ENCODE measurements at regions of chr2 and their contacts with region 1.

Region 1: GRCh38 chr2:136238286-136239078 is 120.5 kb upstream of the CXCR4 start:
- DNase-seq: peak; percentile 93
- ATAC-seq: peak; percentile 70
- H3K4me3 ChIP-seq: peak overlapping the region in 1 of 5 experiments; percentile 17
- H3K4me3 Mint-ChIP-seq: peak overlapping the region; percentile 23
- H3K27ac ChIP-seq: peak overlapping the region; percentile 98
- H3K27ac Mint-ChIP-seq: peak overlapping the region; percentile 87
- H3K4me1 ChIP-seq: peaks cover 66 to 74% of the 10 kb centered on the region in 2 donors
- H3K4me1 Mint-ChIP-seq: peaks cover 85% of the 10 kb centered on the region
- H3K27me3 ChIP-seq: no peaks in the 10 kb centered on the region
- H3K27me3 Mint-ChIP-seq: no peaks in the 10 kb centered on the region
- CTCF ChIP-seq: no peak

Region 2: DNA sequence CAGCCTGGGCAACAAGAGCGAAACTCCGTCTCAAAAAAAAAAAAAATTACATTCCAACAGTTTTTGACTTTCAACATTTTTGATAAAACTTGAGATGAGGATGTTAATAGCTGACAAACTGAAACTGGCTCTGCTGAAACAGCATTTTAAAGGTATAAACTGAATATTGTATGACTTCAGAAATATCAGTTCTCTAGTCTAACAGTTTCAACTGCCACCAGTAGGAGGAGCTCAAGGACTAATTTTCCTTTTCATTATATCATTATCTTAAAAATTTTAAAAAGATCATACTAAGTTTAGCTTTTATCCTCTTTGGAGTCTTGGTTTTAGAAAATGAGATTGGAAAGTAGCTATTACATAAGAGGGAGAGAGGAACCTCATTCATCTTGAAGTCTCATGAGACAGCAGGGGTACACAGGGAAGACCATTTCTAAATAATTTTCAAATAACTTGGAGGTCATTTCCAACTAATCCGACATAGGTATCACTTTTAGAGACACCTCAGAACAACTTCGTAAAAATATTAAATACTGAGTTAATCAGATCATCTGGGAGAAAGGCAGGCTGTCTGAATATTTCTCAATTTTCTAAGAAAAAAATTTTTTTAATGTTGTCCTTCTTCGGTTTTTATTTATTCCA is 324.6 kb before region 1 on chr2:
- CTCF ChIA-PET with region 1: interaction called, 17 read pairs
- POLR2A ChIA-PET with region 1: interaction called, 3 read pairs
- intact Hi-C with region 1: no loop called
- DNase-seq: peak; percentile 74
- ATAC-seq: peak; percentile 41
- H3K4me3 ChIP-seq: no peak overlapping the region
- H3K4me3 Mint-ChIP-seq: no peak overlapping the region
- H3K27ac ChIP-seq: peak overlapping the region in 1 of 2 donors; percentile 46
- H3K27ac Mint-ChIP-seq: peak overlapping the region; percentile 46
- H3K4me1 ChIP-seq: no peaks in the 10 kb centered on the region
- H3K4me1 Mint-ChIP-seq: peaks cover 10% of the 10 kb centered on the region
- H3K27me3 ChIP-seq: no peaks in the 10 kb centered on the region
- H3K27me3 Mint-ChIP-seq: no peaks in the 10 kb centered on the region
- CTCF ChIP-seq: peak; percentile 96

Region 3: DNA sequence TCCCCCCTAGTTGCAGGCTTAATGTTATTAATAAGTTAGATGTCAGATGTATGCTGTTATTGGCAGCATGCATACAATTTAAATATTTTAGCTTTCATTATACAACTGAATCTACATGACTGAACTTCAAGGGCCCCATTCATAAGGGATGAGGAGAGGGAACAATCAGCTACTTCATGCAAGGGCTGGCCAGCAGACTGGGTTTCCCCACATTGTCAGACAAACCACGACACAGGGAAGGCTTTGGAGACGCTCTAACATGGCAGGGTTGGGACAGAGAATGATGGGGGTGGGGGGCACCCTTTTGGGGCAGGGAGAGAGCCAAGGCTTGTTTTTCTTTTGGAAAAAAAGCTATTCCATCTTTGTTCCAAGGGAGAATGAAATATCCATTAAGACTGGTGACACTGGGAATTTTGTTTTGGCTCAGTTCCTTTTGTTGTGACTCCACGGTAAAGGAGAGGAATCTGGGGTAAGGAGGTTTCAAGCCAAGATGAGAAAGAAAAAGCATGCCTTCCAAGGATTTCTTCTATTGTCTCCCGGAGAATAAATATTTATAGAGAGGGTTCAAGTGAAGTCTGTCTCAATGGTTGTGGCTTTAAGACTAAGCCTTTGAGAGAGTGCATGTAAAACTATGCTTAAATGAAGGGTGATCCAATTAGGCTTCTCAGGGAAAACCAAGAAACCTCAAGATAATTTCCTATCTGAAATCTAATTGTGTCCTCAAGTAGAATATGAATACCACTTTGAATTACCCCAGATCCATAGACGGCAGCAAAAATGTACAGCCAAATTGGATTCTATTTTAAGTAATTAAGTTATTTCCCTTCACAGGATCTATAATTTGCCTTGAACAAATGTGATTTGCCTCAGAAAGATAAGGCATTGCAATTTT is 125.9 kb before region 1 on chr2:
- CTCF ChIA-PET with region 1: interaction called, 7 read pairs
- POLR2A ChIA-PET with region 1: interaction called, 136 read pairs
- intact Hi-C with region 1: no loop called
- DNase-seq: peak; percentile 48
- ATAC-seq: no peak
- H3K4me3 ChIP-seq: no peak overlapping the region
- H3K4me3 Mint-ChIP-seq: peak overlapping the region; percentile 98
- H3K27ac ChIP-seq: no peak overlapping the region
- H3K27ac Mint-ChIP-seq: peak overlapping the region; percentile 69
- H3K4me1 ChIP-seq: peaks cover 70 to 72% of the 10 kb centered on the region in 2 donors
- H3K4me1 Mint-ChIP-seq: peaks cover 74% of the 10 kb centered on the region
- H3K27me3 ChIP-seq: no peaks in the 10 kb centered on the region
- H3K27me3 Mint-ChIP-seq: no peaks in the 10 kb centered on the region
- CTCF ChIP-seq: no peak

Region 4: GRCh38 chr2:136135921-136136906 is 102.3 kb before region 1 on chr2:
- CTCF ChIA-PET with region 1: interaction called, 97 read pairs
- POLR2A ChIA-PET with region 1: interaction called, 224 read pairs
- intact Hi-C with region 1: loop called (anchors 1 kb)
- DNase-seq: peak; percentile 94
- ATAC-seq: peak; percentile 50
- H3K4me3 ChIP-seq: peak overlapping the region in 3 of 5 experiments; percentile 10 to 33 (median 10)
- H3K4me3 Mint-ChIP-seq: peak overlapping the region; percentile 83
- H3K27ac ChIP-seq: peak overlapping the region; percentile 98 to 99
- H3K27ac Mint-ChIP-seq: peak overlapping the region; percentile 96
- H3K4me1 ChIP-seq: peaks cover 94 to 98% of the 10 kb centered on the region in 2 donors
- H3K4me1 Mint-ChIP-seq: peaks cover 92% of the 10 kb centered on the region
- H3K27me3 ChIP-seq: no peaks in the 10 kb centered on the region
- H3K27me3 Mint-ChIP-seq: no peaks in the 10 kb centered on the region
- CTCF ChIP-seq: no peak

Region 5: GRCh38 chr2:136191041-136191440 is 47.4 kb before region 1 on chr2:
- CTCF ChIA-PET with region 1: no interaction called
- POLR2A ChIA-PET with region 1: no interaction called
- intact Hi-C with region 1: no loop called
- DNase-seq: no peak
- ATAC-seq: no peak
- H3K4me3 ChIP-seq: no peak overlapping the region
- H3K4me3 Mint-ChIP-seq: no peak overlapping the region
- H3K27ac ChIP-seq: no peak overlapping the region
- H3K27ac Mint-ChIP-seq: no peak overlapping the region
- H3K4me1 ChIP-seq: peaks cover 8 to 17% of the 10 kb centered on the region in 2 donors
- H3K4me1 Mint-ChIP-seq: peaks cover 28% of the 10 kb centered on the region
- H3K27me3 ChIP-seq: no peaks in the 10 kb centered on the region
- H3K27me3 Mint-ChIP-seq: no peaks in the 10 kb centered on the region
- CTCF ChIP-seq: no peak

Region 6: GRCh38 chr2:136217996-136218395 is 20.5 kb before region 1 on chr2:
- CTCF ChIA-PET with region 1: interaction called, 97 read pairs
- POLR2A ChIA-PET with region 1: interaction called, 44 read pairs
- intact Hi-C with region 1: loop called (anchors 1 kb)
- DNase-seq: no peak
- ATAC-seq: no peak
- H3K4me3 ChIP-seq: no peak overlapping the region
- H3K4me3 Mint-ChIP-seq: peak overlapping the region; percentile 24
- H3K27ac ChIP-seq: no peak overlapping the region
- H3K27ac Mint-ChIP-seq: peak overlapping the region; percentile 64
- H3K4me1 ChIP-seq: peaks cover 64 to 76% of the 10 kb centered on the region in 2 donors
- H3K4me1 Mint-ChIP-seq: peaks cover 94% of the 10 kb centered on the region
- H3K27me3 ChIP-seq: no peaks in the 10 kb centered on the region
- H3K27me3 Mint-ChIP-seq: no peaks in the 10 kb centered on the region
- CTCF ChIP-seq: no peak

Region 7: DNA sequence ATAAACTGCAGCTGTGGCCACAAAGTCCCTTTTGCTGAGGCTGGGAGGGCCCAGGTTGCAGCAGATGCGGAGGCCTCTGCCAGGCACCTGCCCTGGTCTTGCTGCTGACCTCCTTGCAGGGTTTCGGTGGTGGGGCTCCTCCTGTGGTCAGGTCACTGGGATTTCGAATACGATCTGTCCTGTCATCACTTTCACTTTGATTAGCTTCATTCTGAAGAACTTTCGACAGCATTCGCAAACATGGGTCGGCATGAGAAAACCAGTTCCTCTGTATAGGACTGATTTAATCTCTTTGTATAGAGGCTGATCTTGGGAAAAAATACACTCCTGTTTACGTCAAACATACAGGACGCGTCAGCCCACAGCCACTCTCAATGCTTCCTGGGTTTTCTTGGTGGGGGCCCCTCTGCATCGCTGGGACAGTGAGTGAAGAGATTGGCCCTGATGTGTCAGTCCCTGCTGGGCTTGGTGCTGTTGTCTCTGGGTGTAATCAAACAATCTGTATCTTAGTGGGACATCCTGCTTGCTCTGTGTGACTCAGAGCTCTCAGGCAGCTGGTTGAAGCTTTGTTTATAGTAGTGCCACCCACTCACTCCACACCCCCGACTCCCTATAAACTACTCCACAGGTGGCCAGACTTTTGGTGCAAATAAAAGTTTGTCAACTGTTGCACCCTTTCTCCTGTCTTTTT is 88.8 kb after region 1 on chr2:
- CTCF ChIA-PET with region 1: interaction called, 8 read pairs
- POLR2A ChIA-PET with region 1: interaction called, 15 read pairs
- intact Hi-C with region 1: no loop called
- DNase-seq: peak; percentile 53
- ATAC-seq: peak; percentile 75
- H3K4me3 ChIP-seq: peak overlapping the region in 4 of 5 experiments; percentile 6 to 32 (median 16)
- H3K4me3 Mint-ChIP-seq: peak overlapping the region; percentile 69
- H3K27ac ChIP-seq: peak overlapping the region; percentile 66
- H3K27ac Mint-ChIP-seq: peak overlapping the region; percentile 88
- H3K4me1 ChIP-seq: peaks cover 33 to 48% of the 10 kb centered on the region in 2 donors
- H3K4me1 Mint-ChIP-seq: peaks cover 57% of the 10 kb centered on the region
- H3K27me3 ChIP-seq: no peaks in the 10 kb centered on the region
- H3K27me3 Mint-ChIP-seq: no peaks in the 10 kb centered on the region
- CTCF ChIP-seq: no peak

Region 8: DNA sequence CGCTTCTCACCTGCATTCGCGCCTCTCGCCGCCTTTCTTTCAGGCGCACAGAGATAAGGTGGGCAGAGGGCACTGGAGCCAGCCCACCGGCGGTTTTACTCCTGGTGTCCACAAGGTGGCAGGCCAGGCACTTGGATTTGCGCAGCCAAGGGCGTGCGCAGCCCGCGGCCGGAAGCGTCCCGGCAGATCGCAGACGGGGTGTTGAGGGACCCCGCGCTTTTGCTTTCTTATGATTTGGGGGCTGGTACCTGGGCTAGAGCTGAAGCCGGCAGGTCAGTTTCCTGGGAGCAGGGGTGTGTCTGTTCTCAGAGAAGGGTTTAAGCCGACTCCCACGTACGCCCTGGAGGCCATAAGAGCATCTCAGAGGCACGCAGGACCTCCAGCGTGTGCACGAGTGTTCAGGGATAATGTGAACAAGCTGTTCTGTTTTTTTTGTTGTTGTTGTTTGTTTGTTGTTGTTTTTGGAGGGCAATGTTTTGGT is 185.1 kb after region 1 on chr2:
- CTCF ChIA-PET with region 1: no interaction called
- POLR2A ChIA-PET with region 1: no interaction called
- intact Hi-C with region 1: no loop called
- DNase-seq: peak; percentile 86
- ATAC-seq: peak; percentile 100
- H3K4me3 ChIP-seq: peak overlapping the region; percentile 42 to 92 (median 57)
- H3K4me3 Mint-ChIP-seq: peak overlapping the region; percentile 84
- H3K27ac ChIP-seq: no peak overlapping the region
- H3K27ac Mint-ChIP-seq: peak overlapping the region; percentile 28
- H3K4me1 ChIP-seq: peaks cover 10% of the 10 kb centered on the region in 2 donors
- H3K4me1 Mint-ChIP-seq: peaks cover 13% of the 10 kb centered on the region
- H3K27me3 ChIP-seq: peaks cover 0 to 20% (median 4%) of the 10 kb centered on the region in 4 experiments
- H3K27me3 Mint-ChIP-seq: peaks cover 39% of the 10 kb centered on the region
- CTCF ChIP-seq: peak; percentile 86

Measured in B cell (primary cell).